AG04450 (cell line): ENCODE measurements at regions of chr21 and their contacts with region 1.

Region 1: DNA sequence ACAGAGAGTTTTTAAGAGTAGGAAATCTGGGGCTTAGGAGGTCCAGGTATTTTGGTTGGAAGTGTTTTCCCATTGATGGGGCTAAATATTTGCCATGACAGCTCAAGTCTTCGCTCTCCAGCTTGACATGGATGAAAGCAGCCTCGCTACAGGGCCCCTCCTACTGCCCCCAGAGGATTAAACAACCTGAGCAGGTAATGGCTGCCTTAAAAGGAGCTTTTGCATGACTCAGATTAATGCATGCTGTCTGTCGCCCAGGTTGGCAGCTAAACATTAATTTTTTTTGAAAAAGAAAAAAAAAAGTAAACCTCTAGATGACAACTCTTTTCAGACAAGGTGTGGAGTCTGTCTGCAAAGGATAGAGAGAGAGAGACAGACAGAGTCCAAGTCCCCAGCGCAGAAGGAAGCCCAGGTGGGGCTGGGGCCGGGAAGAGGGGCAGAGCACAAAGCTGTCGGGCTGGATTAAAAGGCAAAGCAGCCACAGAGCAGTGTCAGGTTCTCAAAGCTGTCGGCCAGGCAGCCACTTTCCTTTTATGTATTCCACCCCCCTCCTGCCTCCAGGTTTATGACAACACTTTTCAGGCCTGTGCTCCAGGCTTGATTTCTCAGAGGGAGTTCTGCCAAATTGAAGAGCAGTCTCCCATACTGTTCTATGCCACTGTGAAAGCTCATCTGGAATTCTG is 127.9 kb downstream of the CLIC6 start:
- DNase-seq: no peak
- H3K4me3 ChIP-seq: no peak overlapping the region
- H3K27ac ChIP-seq: peak overlapping the region; percentile 55
- H3K27me3 ChIP-seq: no peaks in the 10 kb centered on the region
- CTCF ChIP-seq: no peak

Region 2: GRCh38 chr21:34642211-34643075 is 154.2 kb before region 1 on chr21:
- CTCF ChIA-PET with region 1: no interaction called
- POLR2A ChIA-PET with region 1: no interaction called
- DNase-seq: no peak
- H3K4me3 ChIP-seq: no peak overlapping the region
- H3K27ac ChIP-seq: no peak overlapping the region
- H3K27me3 ChIP-seq: no peaks in the 10 kb centered on the region
- CTCF ChIP-seq: no peak

Region 3: DNA sequence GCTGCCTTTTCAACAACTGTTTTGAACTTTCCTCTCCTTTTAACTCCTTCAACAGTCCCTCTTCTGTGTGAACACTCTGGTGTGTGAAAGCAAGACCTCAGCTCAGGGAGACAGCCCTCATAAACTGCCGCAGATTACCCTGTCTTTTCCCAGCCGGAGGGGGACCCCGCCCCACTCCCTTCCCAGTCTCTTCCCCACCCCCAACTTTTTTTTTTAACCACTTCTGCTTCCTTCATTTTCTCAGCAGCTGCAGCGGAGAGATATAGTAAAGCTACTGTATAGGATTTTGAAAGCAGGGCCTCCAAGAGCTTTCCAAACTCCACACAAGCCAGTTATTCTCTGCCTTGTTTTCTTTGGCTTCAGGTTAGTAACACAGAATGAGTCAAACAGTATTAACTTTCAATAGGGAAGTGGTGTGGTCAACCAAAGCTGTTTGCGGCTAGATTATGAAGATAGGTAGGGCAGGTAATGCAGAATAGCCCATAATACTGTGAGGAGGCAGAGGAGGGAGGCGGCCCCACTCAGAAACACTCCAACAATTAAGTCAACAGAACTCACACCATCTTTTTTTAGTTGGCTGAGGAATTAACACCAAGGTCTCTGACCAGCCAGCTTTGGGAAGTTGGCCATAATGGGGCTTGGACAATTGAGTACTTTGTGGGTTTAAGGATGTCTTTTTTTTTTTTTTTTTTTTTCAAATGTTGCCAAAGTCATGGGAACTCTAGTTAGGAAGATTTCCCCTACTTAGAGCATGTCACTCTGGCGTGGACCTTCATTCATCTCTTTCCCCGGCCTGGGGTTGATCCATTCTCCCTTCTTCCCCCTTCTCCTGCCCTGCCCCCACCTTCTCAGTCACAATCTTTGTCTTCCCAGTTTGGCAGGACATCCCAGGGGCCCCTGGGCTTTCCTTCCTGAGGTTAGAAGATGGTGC is 49.1 kb after region 1 on chr21:
- CTCF ChIA-PET with region 1: no interaction called
- POLR2A ChIA-PET with region 1: interaction called, 11 read pairs
- DNase-seq: peak; percentile 51
- H3K4me3 ChIP-seq: no peak overlapping the region
- H3K27ac ChIP-seq: peak overlapping the region; percentile 65
- H3K27me3 ChIP-seq: no peaks in the 10 kb centered on the region
- CTCF ChIP-seq: no peak